Transverse colon (tissue), 4 donors: ENCODE measurements at regions of chr1 and their contacts with region 1.

Region 1: GRCh38 chr1:23743287-23744052 is at the start of gene ELOA:
- DNase-seq: peak; percentile 78
- H3K4me3 ChIP-seq: peak within 1 kb of the TSS; percentile 72 to 95 (median 82)
- H3K27ac ChIP-seq: peak within 1 kb of the TSS; percentile 90 to 95 (median 94)
- H3K4me1 ChIP-seq: peaks cover 9 to 32% (median 18%) of the 10 kb centered on the region in 4 donors
- H3K27me3 ChIP-seq: no peaks in the 10 kb centered on the region
- CTCF ChIP-seq: no peak
- EP300 ChIP-seq: no peak
- POLR2A ChIP-seq: peak; percentile 78
- total RNA-seq, gene ELOA: 9.6 to 39.3 (median 33.2) TPM

Region 2: GRCh38 chr1:23496490-23497181 is 246.8 kb before region 1 on chr1:
- in situ Hi-C with region 1: no loop called
- intact Hi-C with region 1: no loop called
- DNase-seq: no peak
- H3K4me3 ChIP-seq: no peak overlapping the region
- H3K27ac ChIP-seq: no peak overlapping the region
- H3K4me1 ChIP-seq: peaks cover 0 to 15% (median 2%) of the 10 kb centered on the region in 4 donors
- H3K27me3 ChIP-seq: no peaks in the 10 kb centered on the region
- CTCF ChIP-seq: no peak
- EP300 ChIP-seq: no peak
- POLR2A ChIP-seq: no peak

Region 3: DNA sequence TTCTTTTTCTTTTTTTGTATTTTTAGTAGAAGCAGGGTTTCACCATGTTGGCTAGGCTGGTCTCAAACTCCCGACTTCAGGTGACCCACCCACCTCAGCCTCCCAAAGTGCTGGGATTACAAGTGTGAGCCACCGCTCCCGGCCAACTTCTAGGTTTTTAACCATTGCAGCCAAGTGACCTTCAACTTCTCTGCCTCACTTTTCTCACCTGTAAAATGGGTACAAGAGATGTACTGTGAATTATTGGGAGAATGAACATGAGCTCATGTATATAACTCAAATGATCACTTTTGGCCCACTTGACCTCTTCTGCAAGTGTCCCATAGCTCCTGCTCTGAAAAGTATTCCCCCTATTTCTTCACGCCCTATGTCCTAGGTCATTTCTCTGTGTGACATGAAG is 63.7 kb before region 1 on chr1:
- in situ Hi-C with region 1: no loop called
- intact Hi-C with region 1: no loop called
- DNase-seq: no peak
- H3K4me3 ChIP-seq: no peak overlapping the region
- H3K27ac ChIP-seq: no peak overlapping the region
- H3K4me1 ChIP-seq: no peaks in the 10 kb centered on the region
- H3K27me3 ChIP-seq: peaks cover 19% of the 10 kb centered on the region
- CTCF ChIP-seq: no peak
- EP300 ChIP-seq: no peak
- POLR2A ChIP-seq: no peak

Region 4: GRCh38 chr1:23691499-23692307 is 51.8 kb before region 1 on chr1 and contains the start of gene RPL11:
- in situ Hi-C with region 1: loop called in 1 of 4 experiments (anchors 10 kb)
- intact Hi-C with region 1: no loop called
- DNase-seq: peak; percentile 93
- H3K4me3 ChIP-seq: peak within 1 kb of the TSS; percentile 63 to 94 (median 80)
- H3K27ac ChIP-seq: peak within 1 kb of the TSS; percentile 84 to 92 (median 88)
- H3K4me1 ChIP-seq: peaks cover 11 to 45% (median 27%) of the 10 kb centered on the region in 4 donors
- H3K27me3 ChIP-seq: no peaks in the 10 kb centered on the region
- CTCF ChIP-seq: peak; percentile 82 to 96 (median 85)
- EP300 ChIP-seq: no peak
- POLR2A ChIP-seq: peak; percentile 93
- total RNA-seq, gene RPL11: 382 to 822 (median 494) TPM

Region 5: DNA sequence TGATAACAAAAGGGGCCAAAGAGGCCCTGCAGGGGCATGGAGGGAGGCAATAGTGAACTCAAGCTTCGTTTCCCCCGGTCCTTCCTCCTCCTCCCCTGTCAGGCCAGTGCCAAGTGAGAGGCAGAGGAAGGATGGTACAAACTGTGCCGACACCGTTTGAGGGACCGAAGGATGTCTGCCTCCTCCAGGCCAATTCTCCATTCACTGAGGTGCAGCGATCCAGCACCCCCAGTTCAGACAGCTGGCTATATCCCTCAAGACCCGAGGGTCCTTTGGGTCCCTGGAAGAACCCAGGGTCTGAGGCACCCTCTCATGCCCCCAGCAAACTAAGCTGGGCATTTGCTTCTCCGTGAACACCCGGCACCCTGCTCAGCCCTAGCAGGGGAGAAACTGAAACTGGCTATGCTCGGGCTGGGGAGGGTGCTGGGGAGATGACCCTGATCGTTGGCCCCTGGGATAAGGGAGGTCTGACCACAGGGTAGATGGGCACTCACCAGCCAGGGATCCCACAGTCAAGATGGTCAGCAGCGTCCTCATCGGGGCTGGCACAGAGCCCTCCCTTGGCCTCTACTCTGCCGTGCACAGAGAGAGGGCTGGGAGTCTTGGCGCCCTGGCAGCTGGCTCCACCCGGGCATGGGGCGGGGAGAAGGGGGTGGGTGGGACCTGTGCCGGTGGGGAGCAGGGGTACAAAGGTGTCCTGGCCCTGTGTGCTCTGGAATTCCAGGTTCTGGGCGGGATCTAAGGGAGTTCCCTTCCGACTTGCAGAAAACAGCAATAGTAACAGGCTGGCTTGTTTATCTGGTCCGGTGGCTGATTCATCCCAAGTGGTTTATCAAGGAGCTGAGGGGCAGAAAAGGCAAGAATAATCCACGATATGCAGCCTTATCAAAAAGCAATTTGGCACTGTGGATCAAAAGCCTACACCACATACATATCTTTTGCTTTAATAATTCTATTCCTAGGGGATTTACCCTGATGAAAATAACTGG is 399.4 kb after region 1 on chr1 and contains the start of gene IL22RA1:
- in situ Hi-C with region 1: no loop called
- intact Hi-C with region 1: no loop called
- DNase-seq: peak; percentile 84
- H3K4me3 ChIP-seq: peak within 1 kb of the TSS in 3 of 4 donors; percentile 37 to 52 (median 47)
- H3K27ac ChIP-seq: peak within 1 kb of the TSS; percentile 58 to 71 (median 67)
- H3K4me1 ChIP-seq: peaks cover 0 to 12% (median 6%) of the 10 kb centered on the region in 4 donors
- H3K27me3 ChIP-seq: no peaks in the 10 kb centered on the region
- CTCF ChIP-seq: no peak
- EP300 ChIP-seq: no peak
- POLR2A ChIP-seq: peak; percentile 68
- total RNA-seq, gene IL22RA1: 4.4 to 29.2 (median 27.3) TPM